B cell (primary cell): ENCODE measurements at regions of chr3 and their contacts with region 1.

Region 1: GRCh38 chr3:13452490-13453335 is 27.4 kb upstream of the HDAC11 start:
- DNase-seq: peak; percentile 74
- ATAC-seq: no peak
- H3K4me3 ChIP-seq: peak overlapping the region in 4 of 5 experiments; percentile 54 to 65 (median 59)
- H3K4me3 Mint-ChIP-seq: peak overlapping the region; percentile 87
- H3K27ac ChIP-seq: peak overlapping the region; percentile 67 to 78
- H3K27ac Mint-ChIP-seq: peak overlapping the region; percentile 84
- H3K4me1 ChIP-seq: peaks cover 6 to 16% of the 10 kb centered on the region in 2 donors
- H3K4me1 Mint-ChIP-seq: peaks cover 18% of the 10 kb centered on the region
- H3K27me3 ChIP-seq: no peaks in the 10 kb centered on the region
- H3K27me3 Mint-ChIP-seq: no peaks in the 10 kb centered on the region
- CTCF ChIP-seq: peak; percentile 84

Region 2: GRCh38 chr3:13022348-13023234 is 430.1 kb before region 1 on chr3:
- CTCF ChIA-PET with region 1: no interaction called
- POLR2A ChIA-PET with region 1: no interaction called
- intact Hi-C with region 1: loop called (anchors 5 kb)
- DNase-seq: peak; percentile 72
- ATAC-seq: peak; percentile 62
- H3K4me3 ChIP-seq: peak overlapping the region; percentile 81 to 98 (median 88)
- H3K4me3 Mint-ChIP-seq: peak overlapping the region; percentile 100
- H3K27ac ChIP-seq: peak overlapping the region; percentile 96 to 97
- H3K27ac Mint-ChIP-seq: peak overlapping the region; percentile 95
- H3K4me1 ChIP-seq: peaks cover 45 to 55% of the 10 kb centered on the region in 2 donors
- H3K4me1 Mint-ChIP-seq: peaks cover 78% of the 10 kb centered on the region
- H3K27me3 ChIP-seq: no peaks in the 10 kb centered on the region
- H3K27me3 Mint-ChIP-seq: no peaks in the 10 kb centered on the region
- CTCF ChIP-seq: no peak

Region 3: DNA sequence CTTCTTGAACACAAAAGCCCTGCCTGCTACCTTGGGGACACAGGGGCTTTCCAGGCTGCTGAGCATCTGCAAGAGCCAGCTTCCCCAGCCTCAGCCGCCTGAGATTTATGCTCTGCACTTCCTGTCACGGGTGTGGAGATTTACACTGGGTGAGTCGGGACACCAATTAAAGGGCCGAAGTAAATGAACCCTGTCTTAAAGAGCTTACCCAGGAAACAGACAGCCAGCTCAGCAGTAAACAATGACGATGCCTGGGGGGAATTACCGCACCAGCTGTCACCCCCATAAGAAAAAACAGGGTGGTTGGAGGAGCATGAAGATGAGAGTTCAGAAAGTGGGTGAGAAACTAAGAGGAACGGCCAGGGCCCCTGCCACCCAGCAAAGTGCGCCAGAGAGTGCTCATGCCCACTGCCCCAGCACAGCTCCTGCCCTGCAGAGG is 342.0 kb before region 1 on chr3:
- CTCF ChIA-PET with region 1: interaction called, 9 read pairs
- POLR2A ChIA-PET with region 1: no interaction called
- intact Hi-C with region 1: loop called (anchors 1 kb)
- DNase-seq: peak; percentile 98
- ATAC-seq: peak; percentile 86
- H3K4me3 ChIP-seq: peak overlapping the region in 4 of 5 experiments; percentile 13 to 24 (median 16)
- H3K4me3 Mint-ChIP-seq: peak overlapping the region; percentile 64
- H3K27ac ChIP-seq: peak overlapping the region; percentile 98 to 99
- H3K27ac Mint-ChIP-seq: peak overlapping the region; percentile 96
- H3K4me1 ChIP-seq: peaks cover 59 to 62% of the 10 kb centered on the region in 2 donors
- H3K4me1 Mint-ChIP-seq: peaks cover 58% of the 10 kb centered on the region
- H3K27me3 ChIP-seq: peaks cover 0 to under 1% (median 0%) of the 10 kb centered on the region in 4 experiments
- H3K27me3 Mint-ChIP-seq: no peaks in the 10 kb centered on the region
- CTCF ChIP-seq: no peak

Region 4: GRCh38 chr3:13346481-13347389 is 106.0 kb before region 1 on chr3:
- CTCF ChIA-PET with region 1: interaction called, 40 read pairs
- POLR2A ChIA-PET with region 1: no interaction called
- intact Hi-C with region 1: loop called (anchors 5 kb)
- DNase-seq: peak; percentile 42
- ATAC-seq: peak; percentile 47
- H3K4me3 ChIP-seq: no peak overlapping the region
- H3K4me3 Mint-ChIP-seq: no peak overlapping the region
- H3K27ac ChIP-seq: no peak overlapping the region
- H3K27ac Mint-ChIP-seq: peak overlapping the region; percentile 67
- H3K4me1 ChIP-seq: peaks cover 6 to 15% of the 10 kb centered on the region in 2 donors
- H3K4me1 Mint-ChIP-seq: peaks cover 23% of the 10 kb centered on the region
- H3K27me3 ChIP-seq: no peaks in the 10 kb centered on the region
- H3K27me3 Mint-ChIP-seq: no peaks in the 10 kb centered on the region
- CTCF ChIP-seq: no peak

Region 5: DNA sequence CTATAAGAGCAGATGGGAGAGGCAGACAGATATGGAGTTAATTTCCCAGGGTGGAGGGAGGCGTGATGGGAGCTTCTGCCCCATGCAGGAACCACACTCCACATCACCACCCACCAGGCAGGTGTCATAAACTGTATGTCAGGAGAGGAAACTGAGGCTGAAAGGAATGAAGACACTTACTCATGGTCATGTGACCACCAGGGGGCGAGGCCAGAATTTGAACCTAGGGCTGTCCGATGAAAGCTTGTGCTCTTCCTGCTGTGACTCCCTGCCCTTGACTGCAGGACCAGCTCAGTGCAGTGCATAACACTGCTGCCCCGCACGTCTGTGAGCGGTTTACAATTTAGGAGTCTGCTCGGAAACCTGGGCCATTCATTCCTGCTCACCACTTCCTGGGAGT is 61.4 kb before region 1 on chr3:
- CTCF ChIA-PET with region 1: interaction called, 109 read pairs
- POLR2A ChIA-PET with region 1: interaction called, 13 read pairs
- intact Hi-C with region 1: loop called (anchors 1 kb)
- DNase-seq: peak; percentile 42
- ATAC-seq: no peak
- H3K4me3 ChIP-seq: no peak overlapping the region
- H3K4me3 Mint-ChIP-seq: no peak overlapping the region
- H3K27ac ChIP-seq: no peak overlapping the region
- H3K27ac Mint-ChIP-seq: no peak overlapping the region
- H3K4me1 ChIP-seq: no peaks in the 10 kb centered on the region
- H3K4me1 Mint-ChIP-seq: peaks cover under 1% of the 10 kb centered on the region
- H3K27me3 ChIP-seq: no peaks in the 10 kb centered on the region
- H3K27me3 Mint-ChIP-seq: no peaks in the 10 kb centered on the region
- CTCF ChIP-seq: peak; percentile 43

Region 6: GRCh38 chr3:13427662-13428603 is 24.8 kb before region 1 on chr3:
- CTCF ChIA-PET with region 1: interaction called, 15 read pairs
- POLR2A ChIA-PET with region 1: no interaction called
- intact Hi-C with region 1: no loop called
- DNase-seq: peak; percentile 51
- ATAC-seq: peak; percentile 47
- H3K4me3 ChIP-seq: no peak overlapping the region
- H3K4me3 Mint-ChIP-seq: peak overlapping the region; percentile 4
- H3K27ac ChIP-seq: peak overlapping the region; percentile 31 to 71
- H3K27ac Mint-ChIP-seq: peak overlapping the region; percentile 78
- H3K4me1 ChIP-seq: peaks cover 7 to 9% of the 10 kb centered on the region in 2 donors
- H3K4me1 Mint-ChIP-seq: peaks cover 10% of the 10 kb centered on the region
- H3K27me3 ChIP-seq: no peaks in the 10 kb centered on the region
- H3K27me3 Mint-ChIP-seq: no peaks in the 10 kb centered on the region
- CTCF ChIP-seq: no peak

Region 7: GRCh38 chr3:13487403-13487802 is 34.7 kb after region 1 on chr3:
- CTCF ChIA-PET with region 1: no interaction called
- POLR2A ChIA-PET with region 1: no interaction called
- intact Hi-C with region 1: no loop called
- DNase-seq: no peak
- ATAC-seq: no peak
- H3K4me3 ChIP-seq: no peak overlapping the region
- H3K4me3 Mint-ChIP-seq: no peak overlapping the region
- H3K27ac ChIP-seq: no peak overlapping the region
- H3K27ac Mint-ChIP-seq: no peak overlapping the region
- H3K4me1 ChIP-seq: peaks cover 0 to 4% of the 10 kb centered on the region in 2 donors
- H3K4me1 Mint-ChIP-seq: no peaks in the 10 kb centered on the region
- H3K27me3 ChIP-seq: no peaks in the 10 kb centered on the region
- H3K27me3 Mint-ChIP-seq: no peaks in the 10 kb centered on the region
- CTCF ChIP-seq: no peak

Region 8: GRCh38 chr3:13528217-13528867 is 75.6 kb after region 1 on chr3:
- CTCF ChIA-PET with region 1: no interaction called
- POLR2A ChIA-PET with region 1: no interaction called
- intact Hi-C with region 1: no loop called
- DNase-seq: no peak
- ATAC-seq: no peak
- H3K4me3 ChIP-seq: no peak overlapping the region
- H3K4me3 Mint-ChIP-seq: no peak overlapping the region
- H3K27ac ChIP-seq: no peak overlapping the region
- H3K27ac Mint-ChIP-seq: no peak overlapping the region
- H3K4me1 ChIP-seq: no peaks in the 10 kb centered on the region
- H3K4me1 Mint-ChIP-seq: no peaks in the 10 kb centered on the region
- H3K27me3 ChIP-seq: no peaks in the 10 kb centered on the region
- H3K27me3 Mint-ChIP-seq: peaks cover 22% of the 10 kb centered on the region
- CTCF ChIP-seq: no peak